Endothelial cell of umbilical vein (primary cell): ENCODE measurements at regions of chr15 and their contacts with region 1.

Region 1: GRCh38 chr15:82108489-82109078 is 62.8 kb upstream of the MEX3B start:
- DNase-seq: peak; percentile 60
- H3K4me3 ChIP-seq: no peak overlapping the region
- H3K27ac ChIP-seq: no peak overlapping the region
- H3K4me1 ChIP-seq: no peaks in the 10 kb centered on the region
- H3K27me3 ChIP-seq: no peaks in the 10 kb centered on the region
- CTCF ChIP-seq: peak; percentile 71 to 87
- POLR2A ChIP-seq: no peak

Region 2: DNA sequence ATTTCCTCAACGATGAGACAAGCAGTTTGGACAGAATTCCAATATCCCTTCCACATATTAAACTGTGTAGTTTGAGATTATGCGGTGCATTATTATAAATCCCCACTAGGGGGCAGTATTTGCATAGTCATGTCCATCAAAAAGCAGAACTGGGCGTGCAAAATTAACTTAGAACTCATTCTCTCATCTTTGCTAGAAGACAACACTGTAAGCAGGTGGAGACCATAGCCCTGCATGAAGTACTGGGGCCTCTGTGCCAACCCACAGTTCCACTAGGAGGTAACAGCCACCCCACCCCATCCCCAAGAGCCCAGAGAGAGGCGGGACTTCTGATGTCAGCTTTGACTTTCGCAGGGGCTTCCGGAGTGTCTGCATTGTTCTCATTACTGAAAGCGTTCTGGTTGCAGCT is 627.9 kb before region 1 on chr15:
- CTCF ChIA-PET with region 1: interaction called, 8 read pairs
- POLR2A ChIA-PET with region 1: no interaction called
- dilution Hi-C with region 1: no loop called
- intact Hi-C with region 1: loop called (anchors 1 kb)
- DNase-seq: peak; percentile 70
- H3K4me3 ChIP-seq: no peak overlapping the region
- H3K27ac ChIP-seq: no peak overlapping the region
- H3K4me1 ChIP-seq: peaks cover under 1% of the 10 kb centered on the region
- H3K27me3 ChIP-seq: no peaks in the 10 kb centered on the region
- CTCF ChIP-seq: peak; percentile 48 to 66
- POLR2A ChIP-seq: no peak

Region 3: GRCh38 chr15:82122746-82123400 is 14.3 kb after region 1 on chr15:
- CTCF ChIA-PET with region 1: interaction called, 49 read pairs
- POLR2A ChIA-PET with region 1: no interaction called
- dilution Hi-C with region 1: no loop called
- intact Hi-C with region 1: no loop called
- DNase-seq: peak; percentile 74
- H3K4me3 ChIP-seq: no peak overlapping the region
- H3K27ac ChIP-seq: no peak overlapping the region
- H3K4me1 ChIP-seq: peaks cover 8% of the 10 kb centered on the region
- H3K27me3 ChIP-seq: no peaks in the 10 kb centered on the region
- CTCF ChIP-seq: no peak
- POLR2A ChIP-seq: no peak

Region 4: DNA sequence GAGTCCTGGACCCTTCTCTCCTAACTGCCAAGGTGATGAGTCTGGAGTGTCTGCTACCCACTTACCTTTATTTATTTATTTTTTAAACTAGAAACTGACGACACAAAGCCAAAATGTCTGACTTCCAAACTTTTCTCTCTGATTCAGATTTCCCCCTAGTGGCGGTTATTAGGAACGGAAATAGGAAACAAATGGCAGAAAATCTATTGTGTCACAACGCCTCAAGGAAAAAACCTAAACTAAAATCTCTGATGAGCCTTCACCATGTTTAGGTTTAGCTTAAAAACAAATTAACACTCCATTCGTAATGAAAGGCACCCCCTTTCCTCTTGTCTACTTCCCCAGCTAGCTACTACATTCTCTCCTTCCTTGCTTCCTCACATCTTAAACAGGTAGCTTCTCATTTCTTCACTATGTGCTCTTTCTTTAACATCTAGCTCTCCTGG is 31.3 kb after region 1 on chr15:
- CTCF ChIA-PET with region 1: interaction called, 63 read pairs
- POLR2A ChIA-PET with region 1: no interaction called
- dilution Hi-C with region 1: no loop called
- intact Hi-C with region 1: loop called (anchors 1 kb)
- DNase-seq: peak; percentile 69
- H3K4me3 ChIP-seq: no peak overlapping the region
- H3K27ac ChIP-seq: peak overlapping the region; percentile 30
- H3K4me1 ChIP-seq: peaks cover 14% of the 10 kb centered on the region
- H3K27me3 ChIP-seq: no peaks in the 10 kb centered on the region
- CTCF ChIP-seq: peak; percentile 51 to 54
- POLR2A ChIP-seq: no peak

Region 5: GRCh38 chr15:82159922-82160321 is 51.3 kb after region 1 on chr15:
- CTCF ChIA-PET with region 1: interaction called, 12 read pairs
- POLR2A ChIA-PET with region 1: no interaction called
- dilution Hi-C with region 1: no loop called
- intact Hi-C with region 1: no loop called
- DNase-seq: peak; percentile 39
- H3K4me3 ChIP-seq: no peak overlapping the region
- H3K27ac ChIP-seq: no peak overlapping the region
- H3K4me1 ChIP-seq: no peaks in the 10 kb centered on the region
- H3K27me3 ChIP-seq: no peaks in the 10 kb centered on the region
- CTCF ChIP-seq: no peak
- POLR2A ChIP-seq: no peak

Region 6: DNA sequence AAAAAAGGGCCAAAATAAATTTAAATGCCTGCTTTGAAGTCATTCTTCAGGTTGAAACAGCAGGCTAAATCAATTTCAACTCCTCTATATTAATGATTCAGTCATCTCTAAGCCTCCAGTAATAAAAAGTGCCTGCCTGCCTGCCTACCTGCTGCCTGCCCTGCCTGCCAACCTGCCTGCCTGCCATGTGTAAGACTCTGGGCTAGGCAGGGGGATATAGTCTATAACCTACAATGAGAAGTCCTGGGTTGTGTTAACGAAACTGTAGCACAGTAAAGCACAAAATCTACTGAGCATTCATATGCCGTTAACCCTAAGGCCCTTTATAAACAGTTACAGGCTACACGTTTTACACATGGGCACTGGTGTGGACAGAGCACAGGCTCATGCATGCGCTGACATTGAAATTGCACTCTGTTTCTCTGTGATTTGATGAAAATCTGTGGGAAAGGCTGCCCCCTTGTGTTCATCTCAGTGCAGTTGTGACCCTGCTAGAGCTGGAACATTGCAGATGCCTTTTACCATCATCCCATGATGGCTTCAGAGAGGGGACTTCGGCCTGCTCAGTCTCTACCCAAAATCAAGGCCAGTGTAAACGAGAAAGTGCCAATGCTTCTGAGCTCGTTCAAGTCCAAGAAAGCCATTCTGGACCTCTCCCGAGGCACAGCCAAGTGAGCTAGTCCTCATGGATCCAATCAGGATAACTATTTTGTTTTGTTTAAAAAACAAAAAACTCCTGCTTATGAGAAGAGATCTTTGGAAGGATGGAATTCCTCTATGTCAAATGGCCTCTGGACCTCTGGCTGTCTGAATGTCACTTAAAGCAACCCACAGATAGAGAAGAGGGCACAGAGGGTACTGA is 89.4 kb after region 1 on chr15:
- CTCF ChIA-PET with region 1: interaction called, 91 read pairs
- POLR2A ChIA-PET with region 1: no interaction called
- dilution Hi-C with region 1: no loop called
- intact Hi-C with region 1: loop called (anchors 1 kb)
- DNase-seq: peak; percentile 74
- H3K4me3 ChIP-seq: no peak overlapping the region
- H3K27ac ChIP-seq: no peak overlapping the region
- H3K4me1 ChIP-seq: no peaks in the 10 kb centered on the region
- H3K27me3 ChIP-seq: no peaks in the 10 kb centered on the region
- CTCF ChIP-seq: peak; percentile 75 to 81
- POLR2A ChIP-seq: no peak

Region 7: GRCh38 chr15:82653483-82654168 is 545.0 kb after region 1 on chr15:
- CTCF ChIA-PET with region 1: no interaction called
- POLR2A ChIA-PET with region 1: no interaction called
- dilution Hi-C with region 1: no loop called
- intact Hi-C with region 1: no loop called
- DNase-seq: no peak
- H3K4me3 ChIP-seq: no peak overlapping the region
- H3K27ac ChIP-seq: no peak overlapping the region
- H3K4me1 ChIP-seq: no peaks in the 10 kb centered on the region
- H3K27me3 ChIP-seq: peaks cover 8 to 14% of the 10 kb centered on the region in 2 experiments
- CTCF ChIP-seq: no peak
- POLR2A ChIP-seq: no peak